Tibial artery (tissue), 4 donors: ENCODE measurements at regions of chr18 and their contacts with region 1.

Region 1: DNA sequence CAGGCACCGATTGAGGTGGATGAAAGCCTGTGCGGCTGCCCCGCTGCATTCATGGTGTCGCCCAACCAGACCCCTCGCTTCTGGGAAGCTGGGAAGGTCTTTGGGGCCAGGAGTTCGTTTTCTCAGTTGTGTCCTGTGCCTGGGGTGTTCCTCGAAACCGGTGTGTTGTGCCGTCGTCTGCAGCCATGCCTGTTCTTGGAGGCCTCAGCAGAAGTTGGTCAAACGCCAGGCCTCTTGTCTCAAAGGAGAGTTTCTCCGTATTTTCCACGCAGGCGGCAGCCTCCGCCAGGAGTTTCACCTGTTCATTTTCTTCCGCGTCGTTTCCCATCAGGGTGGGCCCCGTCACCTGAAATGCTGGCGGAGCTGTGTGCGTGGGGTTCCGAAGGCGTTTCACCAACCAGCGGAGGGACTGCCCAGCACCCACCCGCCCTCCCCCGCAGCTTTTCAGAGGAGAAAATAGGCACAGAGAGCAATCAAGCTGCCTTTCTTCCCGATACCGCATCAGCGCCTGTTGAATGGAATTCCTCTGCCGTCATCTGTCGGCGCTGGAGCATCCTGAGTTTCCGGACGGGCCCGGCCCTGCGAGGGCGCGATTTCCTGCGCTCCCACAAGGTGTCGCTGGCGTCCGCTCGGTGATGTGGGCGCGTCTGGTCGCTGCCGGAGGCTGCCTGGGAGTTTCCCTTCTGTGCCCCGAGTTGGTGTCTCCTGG is 17.0 kb upstream of the NFATC1 start:
- DNase-seq: peak; percentile 63 to 87
- H3K4me3 ChIP-seq: no peak overlapping the region
- H3K27ac ChIP-seq: no peak overlapping the region
- H3K4me1 ChIP-seq: peaks cover 0 to 15% (median 1%) of the 10 kb centered on the region in 4 donors
- H3K27me3 ChIP-seq: no peaks in the 10 kb centered on the region
- CTCF ChIP-seq: peak; percentile 94 to 98

Region 2: DNA sequence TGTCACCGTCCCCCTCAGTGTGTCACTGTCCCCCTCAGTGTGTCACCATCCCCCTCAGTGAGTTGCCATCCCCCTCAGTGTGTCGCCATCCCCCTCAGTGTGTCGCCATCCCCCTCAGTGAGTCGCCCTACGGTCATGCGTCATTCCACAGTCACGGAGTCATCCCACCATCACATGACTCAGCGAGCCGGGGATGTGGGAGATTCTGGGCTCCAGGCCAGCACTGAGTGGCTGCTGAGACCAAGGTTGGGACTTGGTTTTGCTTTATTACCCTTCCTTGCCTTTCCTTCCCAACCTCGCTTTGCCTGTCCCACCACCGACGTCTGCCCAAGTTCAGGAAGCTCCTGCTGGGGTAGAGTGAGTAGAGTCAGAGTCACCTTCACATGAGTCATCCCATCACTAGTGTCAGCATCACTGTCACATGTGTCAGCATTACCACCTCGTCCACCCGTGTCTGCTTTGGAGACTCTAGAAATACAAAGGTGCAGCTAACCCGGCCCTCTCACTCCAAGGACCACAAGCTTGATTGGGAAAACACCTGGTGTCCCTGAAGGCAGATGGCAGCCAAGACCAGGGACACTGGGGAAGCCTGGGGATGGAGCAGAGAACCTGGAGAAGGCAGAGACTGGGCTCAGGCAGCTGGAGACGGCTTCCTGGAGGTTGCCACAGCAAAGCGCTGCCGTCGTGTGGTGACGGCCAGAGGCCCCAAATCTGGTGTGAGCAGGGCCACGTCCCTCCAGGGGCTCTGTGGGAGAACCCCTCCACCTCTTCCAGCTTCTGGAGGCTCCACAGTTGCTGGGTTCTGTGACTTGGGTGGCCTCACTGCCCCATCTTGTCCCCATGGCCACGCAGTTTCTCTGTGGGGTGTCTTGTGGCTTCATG is 884.3 kb before region 1 on chr18:
- intact Hi-C with region 1: no loop called
- DNase-seq: no peak
- H3K4me3 ChIP-seq: no peak overlapping the region
- H3K27ac ChIP-seq: no peak overlapping the region
- H3K4me1 ChIP-seq: no peaks in the 10 kb centered on the region
- H3K27me3 ChIP-seq: no peaks in the 10 kb centered on the region
- CTCF ChIP-seq: no peak

Region 3: DNA sequence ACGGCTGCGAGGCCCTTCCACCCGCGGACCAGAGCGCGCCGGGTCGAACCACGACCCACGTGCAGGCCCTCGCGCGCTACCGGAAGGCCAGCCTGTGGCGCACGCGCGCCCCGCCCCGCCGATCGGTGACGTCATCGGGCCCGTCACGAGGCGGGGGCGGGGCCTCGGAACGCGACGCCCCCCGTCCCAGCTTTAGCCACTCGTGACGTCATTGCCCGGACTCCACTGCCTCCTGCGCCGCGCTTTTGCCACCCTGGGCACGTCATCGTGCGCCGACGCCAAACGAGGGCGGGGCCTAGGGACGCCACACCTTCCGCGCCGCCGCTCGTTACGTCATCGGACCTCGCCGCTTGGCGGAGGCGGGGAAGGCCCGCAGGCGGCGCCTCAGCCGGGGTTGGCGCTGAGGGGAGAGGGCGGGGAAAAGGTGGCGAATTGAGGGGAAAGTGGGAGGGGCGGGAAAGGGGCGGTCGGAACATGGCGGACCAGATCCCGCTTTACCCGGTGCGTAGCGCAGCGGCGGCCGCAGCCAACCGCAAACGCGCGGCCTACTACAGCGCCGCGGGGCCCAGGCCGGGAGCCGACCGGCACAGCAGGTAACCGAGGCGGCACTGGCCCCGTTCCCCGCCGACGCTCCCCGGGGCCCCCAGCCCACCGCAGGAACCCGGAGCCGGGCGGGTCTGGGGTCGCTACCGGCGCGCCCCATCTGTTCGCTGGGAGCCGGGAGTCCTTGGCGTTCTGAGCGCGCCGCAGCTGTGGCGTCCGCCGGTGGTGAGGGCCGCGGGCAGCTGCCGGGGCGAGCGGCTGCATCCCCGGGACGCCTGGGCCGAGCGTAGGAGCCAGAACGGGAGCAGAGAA is 309.5 kb before region 1 on chr18 and contains the start of gene ATP9B:
- intact Hi-C with region 1: loop called (anchors 10 kb)
- DNase-seq: peak; percentile 95 to 99
- H3K4me3 ChIP-seq: peak within 1 kb of the TSS; percentile 99 to 100
- H3K27ac ChIP-seq: peak within 1 kb of the TSS; percentile 98
- H3K4me1 ChIP-seq: peaks cover 0 to 14% (median 11%) of the 10 kb centered on the region in 4 donors
- H3K27me3 ChIP-seq: no peaks in the 10 kb centered on the region
- CTCF ChIP-seq: no peak

Region 4: DNA sequence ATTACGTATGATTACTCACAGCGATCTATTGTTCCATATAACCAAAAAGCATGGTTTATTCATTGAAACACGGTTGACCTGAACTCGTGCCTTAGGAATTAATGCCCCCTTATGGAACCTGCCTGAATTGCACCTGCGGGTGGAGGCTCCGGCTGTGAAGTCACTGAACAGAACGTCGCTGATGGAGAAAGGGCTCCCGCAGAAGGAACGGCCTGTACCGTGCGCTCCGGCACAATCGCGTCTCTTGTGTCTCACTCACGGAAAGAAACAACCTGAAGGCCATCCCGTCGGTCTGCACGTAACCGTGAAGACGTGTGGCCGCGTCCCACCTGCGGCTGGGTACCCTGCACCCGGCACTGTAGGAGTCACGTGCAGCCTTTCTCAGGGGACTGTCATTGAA is 150.2 kb after region 1 on chr18:
- intact Hi-C with region 1: loop called (anchors 1 kb)
- DNase-seq: peak; percentile 59 to 75
- H3K4me3 ChIP-seq: no peak overlapping the region
- H3K27ac ChIP-seq: no peak overlapping the region
- H3K4me1 ChIP-seq: peaks cover 0 to 16% (median 15%) of the 10 kb centered on the region in 4 donors
- H3K27me3 ChIP-seq: peaks cover 0 to 2% of the 10 kb centered on the region in 2 donors
- CTCF ChIP-seq: peak; percentile 90 to 93

Region 5: GRCh38 chr18:79643054-79643984 is 264.6 kb after region 1 on chr18:
- intact Hi-C with region 1: loop called (anchors 2 kb)
- DNase-seq: no peak
- H3K4me3 ChIP-seq: no peak overlapping the region
- H3K27ac ChIP-seq: no peak overlapping the region
- H3K4me1 ChIP-seq: peaks cover 0 to 19% (median 14%) of the 10 kb centered on the region in 4 donors
- H3K27me3 ChIP-seq: peaks cover 0 to 6% of the 10 kb centered on the region in 2 donors
- CTCF ChIP-seq: no peak